ENCODE measurements at regions of chr12 and their contacts with region 1.

Region 1: GRCh38 chr12:132153501-132154340 is 9.5 kb downstream of the NOC4L start:
- DNase-seq: peak; percentile 86
- ATAC-seq: peak; percentile 99
- H3K4me3 ChIP-seq: no peak overlapping the region
- H3K27ac ChIP-seq: no peak overlapping the region
- H3K4me1 ChIP-seq: no peaks in the 10 kb centered on the region
- H3K27me3 ChIP-seq: no peaks in the 10 kb centered on the region
- CTCF ChIP-seq: peak; percentile 97

Region 2: DNA sequence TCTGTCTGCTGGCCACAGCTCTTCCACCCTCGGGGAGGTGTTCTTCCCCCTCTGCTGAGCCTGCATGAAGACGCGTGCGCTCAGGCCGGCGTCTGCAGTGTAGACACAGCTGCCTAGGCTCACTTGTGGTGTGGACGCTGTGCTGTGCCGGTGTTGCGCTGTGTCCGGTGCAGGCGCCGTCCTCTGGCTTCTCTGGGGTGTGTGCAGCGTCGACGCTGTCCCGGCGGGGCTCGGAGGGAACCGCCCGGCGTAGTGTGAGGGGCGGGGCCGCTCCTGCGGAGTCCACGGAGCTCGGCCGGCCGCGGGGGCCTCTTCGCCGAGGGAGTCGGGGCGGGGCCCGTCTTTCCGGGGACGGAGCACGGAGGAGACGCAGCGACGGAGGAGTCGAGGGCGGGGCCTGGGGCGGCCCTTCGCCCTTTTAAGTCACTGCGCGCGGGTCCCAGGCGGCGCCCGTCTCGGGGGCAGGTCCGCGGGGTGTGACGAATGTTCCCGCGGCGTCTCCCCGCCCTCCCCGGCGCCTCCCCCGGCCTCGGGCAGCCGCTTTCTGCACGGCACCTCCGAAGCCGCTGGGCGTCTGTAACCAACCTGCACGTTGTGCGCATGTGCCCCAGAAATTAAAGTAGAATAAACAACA is 35.8 kb after region 1 on chr12:
- CTCF ChIA-PET with region 1: no interaction called
- POLR2A ChIA-PET with region 1: no interaction called
- intact Hi-C with region 1: loop called (anchors 2 kb)
- DNase-seq: peak; percentile 97
- ATAC-seq: peak; percentile 93
- H3K4me3 ChIP-seq: peak overlapping the region; percentile 87
- H3K27ac ChIP-seq: peak overlapping the region; percentile 10; the same call in 1 of the 2 replicates
- H3K4me1 ChIP-seq: peaks cover 15% of the 10 kb centered on the region
- H3K27me3 ChIP-seq: peaks cover 10% of the 10 kb centered on the region; the same call in 1 of the 2 replicates
- CTCF ChIP-seq: no peak

Region 3: GRCh38 chr12:132210223-132211055 is 56.7 kb after region 1 on chr12:
- CTCF ChIA-PET with region 1: interaction called, 12 read pairs
- POLR2A ChIA-PET with region 1: no interaction called
- intact Hi-C with region 1: no loop called
- DNase-seq: peak; percentile 25
- ATAC-seq: no peak
- H3K4me3 ChIP-seq: no peak overlapping the region
- H3K27ac ChIP-seq: no peak overlapping the region
- H3K4me1 ChIP-seq: no peaks in the 10 kb centered on the region
- H3K27me3 ChIP-seq: peaks cover 23% of the 10 kb centered on the region
- CTCF ChIP-seq: 0 out of 2 replicates have a peak, but pooled peaks have one; percentile 14

Region 4: DNA sequence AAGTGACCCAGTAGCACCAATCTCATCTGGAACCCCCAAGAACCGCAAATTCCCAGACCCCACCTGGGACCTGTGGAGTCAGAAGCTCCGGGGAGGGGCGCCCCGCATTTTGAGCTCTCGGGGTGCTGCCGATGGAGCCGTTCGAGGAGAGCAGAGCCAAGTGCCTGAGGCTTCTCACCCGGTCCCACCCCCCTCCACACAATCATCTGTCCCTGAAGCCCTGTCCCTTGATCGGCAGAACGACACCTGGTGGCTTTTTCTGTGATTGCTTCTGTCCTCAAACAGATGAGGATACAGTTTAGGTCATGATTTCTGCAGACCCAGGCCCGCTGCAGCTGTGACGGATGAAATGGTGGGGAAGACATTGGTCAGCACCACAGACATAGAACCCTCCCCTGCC is 65.2 kb after region 1 on chr12:
- CTCF ChIA-PET with region 1: interaction called, 14 read pairs
- POLR2A ChIA-PET with region 1: no interaction called
- intact Hi-C with region 1: loop called (anchors 2 kb)
- DNase-seq: peak; percentile 64
- ATAC-seq: peak; percentile 73
- H3K4me3 ChIP-seq: no peak overlapping the region
- H3K27ac ChIP-seq: no peak overlapping the region
- H3K4me1 ChIP-seq: 0 out of 2 replicates have a peak, but pooled peaks cover 3% of the 10 kb centered on the region
- H3K27me3 ChIP-seq: peaks cover 61% of the 10 kb centered on the region
- CTCF ChIP-seq: peak; percentile 76

Region 5: DNA sequence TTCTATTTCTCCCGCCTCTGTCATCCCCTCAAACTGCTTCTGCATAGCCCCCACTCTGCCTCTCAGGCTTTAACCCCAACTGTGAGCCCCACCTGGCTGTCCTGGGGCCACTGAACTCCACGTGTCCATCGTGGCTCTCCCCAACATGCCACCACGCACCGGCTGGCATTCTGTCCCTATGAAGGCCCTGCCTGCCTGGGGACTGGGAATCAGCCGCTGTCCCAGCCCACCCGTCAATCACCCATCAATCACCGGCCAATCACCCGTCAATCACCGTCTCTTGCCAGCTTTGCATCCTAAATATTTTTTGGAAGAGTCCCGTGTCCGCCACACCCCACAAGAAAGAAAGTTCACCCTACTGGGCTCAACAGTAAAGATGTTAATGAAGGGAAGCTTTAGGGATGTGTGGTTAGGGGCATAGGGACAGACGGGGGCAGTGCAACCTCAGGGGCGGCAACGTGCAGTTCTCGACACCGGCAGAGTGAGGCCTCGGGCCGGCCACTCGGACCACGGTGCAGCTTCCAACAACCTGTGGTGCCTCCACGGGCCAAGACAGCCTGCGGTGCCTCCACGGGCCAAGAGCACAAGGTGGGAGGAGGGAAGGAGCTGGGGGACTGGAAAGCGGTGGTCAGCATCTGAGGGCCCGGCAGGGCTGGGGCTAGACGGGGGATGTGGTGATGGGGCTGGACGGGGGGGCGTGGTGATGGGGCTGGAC is 90.0 kb after region 1 on chr12:
- CTCF ChIA-PET with region 1: no interaction called
- POLR2A ChIA-PET with region 1: no interaction called
- intact Hi-C with region 1: no loop called
- DNase-seq: no peak
- ATAC-seq: no peak
- H3K4me3 ChIP-seq: no peak overlapping the region
- H3K27ac ChIP-seq: no peak overlapping the region
- H3K4me1 ChIP-seq: no peaks in the 10 kb centered on the region
- H3K27me3 ChIP-seq: 0 out of 2 replicates have a peak, but pooled peaks cover 3% of the 10 kb centered on the region
- CTCF ChIP-seq: no peak

Measured in PC-3 (cell line).